Motor neuron (in vitro differentiated cells): ENCODE measurements at regions of chr13 and their contacts with region 1.

Region 1: GRCh38 chr13:61255035-61255796 is 160.4 kb downstream of the PCDH20 start:
- ATAC-seq: no peak
- H3K4me3 ChIP-seq: no peak overlapping the region
- H3K27ac ChIP-seq: no peak overlapping the region
- H3K4me1 ChIP-seq: no peaks in the 10 kb centered on the region

Region 2: GRCh38 chr13:61170856-61171255 is 84.4 kb before region 1 on chr13:
- in situ Hi-C with region 1: loop called in 1 of 9 experiments (anchors 25 kb)
- ATAC-seq: no peak
- H3K4me3 ChIP-seq: no peak overlapping the region
- H3K27ac ChIP-seq: no peak overlapping the region
- H3K4me1 ChIP-seq: no peaks in the 10 kb centered on the region